ENCODE measurements at regions of chr2 and their contacts with region 1.

Region 1: GRCh38 chr2:61789807-61790602 is 63.9 kb downstream of the FAM161A start:
- DNase-seq: no peak
- H3K4me3 ChIP-seq: no peak overlapping the region
- H3K27ac ChIP-seq: no peak overlapping the region
- H3K4me1 ChIP-seq: no peaks in the 10 kb centered on the region
- H3K27me3 ChIP-seq: no peaks in the 10 kb centered on the region
- CTCF ChIP-seq: no peak

Region 2: GRCh38 chr2:61478086-61478485 is 311.9 kb before region 1 on chr2:
- intact Hi-C with region 1: no loop called
- DNase-seq: no peak
- H3K4me3 ChIP-seq: no peak overlapping the region
- H3K27ac ChIP-seq: no peak overlapping the region
- H3K4me1 ChIP-seq: no peaks in the 10 kb centered on the region
- H3K27me3 ChIP-seq: no peaks in the 10 kb centered on the region
- CTCF ChIP-seq: no peak

Region 3: GRCh38 chr2:61707969-61708852 is 81.8 kb before region 1 on chr2:
- intact Hi-C with region 1: loop called (anchors 10 kb)
- DNase-seq: no peak
- H3K4me3 ChIP-seq: no peak overlapping the region
- H3K27ac ChIP-seq: no peak overlapping the region
- H3K4me1 ChIP-seq: no peaks in the 10 kb centered on the region
- H3K27me3 ChIP-seq: no peaks in the 10 kb centered on the region
- CTCF ChIP-seq: no peak

Region 4: DNA sequence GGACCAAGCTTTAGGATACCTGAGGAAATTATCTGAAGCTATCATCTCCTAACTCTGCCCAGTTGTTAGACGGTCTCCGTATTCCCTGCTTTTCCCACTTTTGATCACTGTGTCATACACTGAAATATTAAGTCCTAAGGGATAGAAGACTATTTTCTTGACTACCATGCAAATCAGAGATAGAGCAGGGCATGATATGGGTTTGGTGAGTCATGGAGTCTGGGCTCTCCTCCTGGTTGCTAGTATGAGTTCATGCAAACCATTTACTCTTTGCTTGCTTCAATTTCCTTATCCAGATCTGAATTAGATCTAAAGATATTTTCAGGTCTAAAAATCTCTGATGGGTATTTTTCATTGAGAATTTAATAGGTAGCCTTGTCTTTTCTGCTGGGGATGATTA is 970.5 kb after region 1 on chr2:
- intact Hi-C with region 1: no loop called
- DNase-seq: no peak
- H3K4me3 ChIP-seq: no peak overlapping the region
- H3K27ac ChIP-seq: no peak overlapping the region
- H3K4me1 ChIP-seq: no peaks in the 10 kb centered on the region
- H3K27me3 ChIP-seq: no peaks in the 10 kb centered on the region
- CTCF ChIP-seq: no peak